Endothelial cell of umbilical vein (primary cell): ENCODE measurements at regions of chr7 and their contacts with region 1.

Region 1: GRCh38 chr7:43604251-43604650 is 21.3 kb downstream of the STK17A start:
- DNase-seq: no peak
- H3K4me3 ChIP-seq: no peak overlapping the region
- H3K27ac ChIP-seq: no peak overlapping the region
- H3K4me1 ChIP-seq: no peaks in the 10 kb centered on the region
- H3K27me3 ChIP-seq: no peaks in the 10 kb centered on the region
- CTCF ChIP-seq: no peak
- POLR2A ChIP-seq: no peak

Region 2: GRCh38 chr7:42940985-42941847 is 663.0 kb before region 1 on chr7:
- CTCF ChIA-PET with region 1: no interaction called
- POLR2A ChIA-PET with region 1: no interaction called
- dilution Hi-C with region 1: no loop called
- intact Hi-C with region 1: no loop called
- DNase-seq: peak; percentile 69
- H3K4me3 ChIP-seq: no peak overlapping the region
- H3K27ac ChIP-seq: no peak overlapping the region
- H3K4me1 ChIP-seq: no peaks in the 10 kb centered on the region
- H3K27me3 ChIP-seq: no peaks in the 10 kb centered on the region
- CTCF ChIP-seq: peak; percentile 82 to 84
- POLR2A ChIP-seq: no peak

Region 3: DNA sequence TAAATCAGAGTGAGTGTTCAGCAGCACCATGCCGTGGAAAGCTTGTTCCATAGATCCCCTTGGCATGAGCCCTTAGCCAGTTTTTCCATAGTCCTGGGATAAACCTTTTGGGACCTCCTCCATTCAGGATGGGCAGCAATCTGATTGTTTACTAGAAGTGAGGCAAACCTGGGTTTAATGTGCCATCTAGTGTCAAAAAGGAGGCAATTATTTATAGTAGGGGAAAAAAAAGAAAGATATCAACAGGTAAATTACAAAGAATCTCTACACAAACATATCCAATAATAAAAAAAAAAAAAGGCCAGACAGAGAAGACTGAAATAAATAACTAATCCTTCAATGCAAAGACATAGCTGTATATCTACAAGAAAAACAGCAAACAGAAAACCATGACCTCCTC is 250.3 kb before region 1 on chr7:
- CTCF ChIA-PET with region 1: no interaction called
- POLR2A ChIA-PET with region 1: no interaction called
- dilution Hi-C with region 1: no loop called
- intact Hi-C with region 1: no loop called
- DNase-seq: no peak
- H3K4me3 ChIP-seq: no peak overlapping the region
- H3K27ac ChIP-seq: no peak overlapping the region
- H3K4me1 ChIP-seq: no peaks in the 10 kb centered on the region
- H3K27me3 ChIP-seq: no peaks in the 10 kb centered on the region
- CTCF ChIP-seq: no peak
- POLR2A ChIP-seq: no peak

Region 4: DNA sequence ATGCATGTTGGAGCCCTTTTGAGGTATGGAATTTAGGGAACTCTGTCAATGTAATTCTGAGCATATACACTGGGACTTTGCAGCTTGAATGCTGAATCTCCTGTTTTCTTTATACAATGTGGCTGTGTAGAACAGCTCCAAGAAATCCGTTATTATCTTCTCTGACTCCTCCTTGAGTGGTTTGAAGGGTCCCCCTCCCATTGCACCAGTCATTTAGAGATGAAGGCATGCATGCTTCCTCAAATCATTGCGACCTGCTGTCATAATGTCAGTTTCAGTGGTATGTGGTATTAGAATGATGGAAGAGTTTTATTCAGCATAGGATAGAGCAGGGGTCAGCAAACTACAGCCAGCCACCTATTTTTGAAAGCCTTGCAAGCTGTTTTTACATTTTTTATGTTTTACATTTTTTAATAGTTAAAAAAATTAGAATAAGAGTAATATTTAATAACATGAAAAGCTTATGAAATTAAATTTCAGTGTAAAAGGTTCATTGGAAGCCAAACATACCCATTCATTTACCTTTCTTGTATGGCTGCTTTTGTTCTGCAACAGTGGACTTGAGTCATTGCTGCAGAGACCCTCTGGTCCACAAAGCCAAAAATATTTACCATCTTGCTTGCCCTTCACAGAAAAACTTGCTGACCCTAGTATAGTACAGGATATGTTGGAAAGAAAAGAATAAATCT is 13.2 kb before region 1 on chr7:
- CTCF ChIA-PET with region 1: interaction called, 3 read pairs
- POLR2A ChIA-PET with region 1: no interaction called
- dilution Hi-C with region 1: no loop called
- intact Hi-C with region 1: loop called (anchors 2 kb)
- DNase-seq: no peak
- H3K4me3 ChIP-seq: no peak overlapping the region
- H3K27ac ChIP-seq: peak overlapping the region; percentile 35
- H3K4me1 ChIP-seq: peaks cover 30% of the 10 kb centered on the region
- H3K27me3 ChIP-seq: no peaks in the 10 kb centered on the region
- CTCF ChIP-seq: no peak
- POLR2A ChIP-seq: no peak